ENCODE measurements at regions of chr5 and their contacts with region 1.

Region 1: GRCh38 chr5:85204289-85204688 is 819.6 kb upstream of the EDIL3 start:
- DNase-seq: no peak
- ATAC-seq: no peak
- H3K4me3 ChIP-seq: no peak overlapping the region
- H3K27ac ChIP-seq: no peak overlapping the region
- H3K4me1 ChIP-seq: no peaks in the 10 kb centered on the region
- H3K27me3 ChIP-seq: no peaks in the 10 kb centered on the region
- CTCF ChIP-seq: no peak
- POLR2A ChIP-seq: no peak
- RAD21 ChIP-seq: no peak

Region 2: GRCh38 chr5:83740741-83741140 is 1463.5 kb before region 1 on chr5:
- CTCF ChIA-PET with region 1: no interaction called
- POLR2A ChIA-PET with region 1: interaction called, 15 read pairs
- dilution Hi-C with region 1: no loop called
- in situ Hi-C with region 1: no loop called
- intact Hi-C with region 1: no loop called
- DNase-seq: no peak
- ATAC-seq: no peak
- H3K4me3 ChIP-seq: no peak overlapping the region
- H3K27ac ChIP-seq: no peak overlapping the region
- H3K4me1 ChIP-seq: no peaks in the 10 kb centered on the region; the same call in 1 of the 2 replicates
- H3K27me3 ChIP-seq: no peaks in the 10 kb centered on the region
- CTCF ChIP-seq: no peak
- POLR2A ChIP-seq: no peak
- RAD21 ChIP-seq: no peak

Region 3: GRCh38 chr5:85428426-85428934 is 224.2 kb after region 1 on chr5:
- CTCF ChIA-PET with region 1: no interaction called
- POLR2A ChIA-PET with region 1: no interaction called
- dilution Hi-C with region 1: no loop called
- in situ Hi-C with region 1: no loop called
- intact Hi-C with region 1: no loop called
- DNase-seq: no peak
- ATAC-seq: no peak
- H3K4me3 ChIP-seq: no peak overlapping the region
- H3K27ac ChIP-seq: no peak overlapping the region
- H3K4me1 ChIP-seq: no peaks in the 10 kb centered on the region
- H3K27me3 ChIP-seq: no peaks in the 10 kb centered on the region
- CTCF ChIP-seq: no peak
- POLR2A ChIP-seq: no peak
- RAD21 ChIP-seq: no peak